Dendritic cell treated with granulocyte-macrophage colony-stimulating factor and Interleukin-4, amounts not matched to agents 40 ng/mL and 50 ng/mL, for 4 days (primary cell): ENCODE measurements at regions of chr17 and their contacts with region 1.

Region 1: GRCh38 chr17:81142301-81143199 is 22.8 kb upstream of the PVALEF start:
- H3K4me3 Mint-ChIP-seq: no peak overlapping the region
- H3K27ac Mint-ChIP-seq: peak overlapping the region; percentile 74
- H3K4me1 Mint-ChIP-seq: peaks cover 36% of the 10 kb centered on the region
- H3K27me3 Mint-ChIP-seq: no peaks in the 10 kb centered on the region

Region 2: GRCh38 chr17:81083125-81083765 is 59.3 kb before region 1 on chr17:
- intact Hi-C with region 1: no loop called
- H3K4me3 Mint-ChIP-seq: no peak overlapping the region
- H3K27ac Mint-ChIP-seq: no peak overlapping the region
- H3K4me1 Mint-ChIP-seq: no peaks in the 10 kb centered on the region
- H3K27me3 Mint-ChIP-seq: no peaks in the 10 kb centered on the region

Region 3: GRCh38 chr17:81094509-81095382 is 47.8 kb before region 1 on chr17:
- intact Hi-C with region 1: no loop called
- H3K4me3 Mint-ChIP-seq: no peak overlapping the region
- H3K27ac Mint-ChIP-seq: peak overlapping the region; percentile 35
- H3K4me1 Mint-ChIP-seq: peaks cover 81% of the 10 kb centered on the region
- H3K27me3 Mint-ChIP-seq: peaks cover 14% of the 10 kb centered on the region

Region 4: DNA sequence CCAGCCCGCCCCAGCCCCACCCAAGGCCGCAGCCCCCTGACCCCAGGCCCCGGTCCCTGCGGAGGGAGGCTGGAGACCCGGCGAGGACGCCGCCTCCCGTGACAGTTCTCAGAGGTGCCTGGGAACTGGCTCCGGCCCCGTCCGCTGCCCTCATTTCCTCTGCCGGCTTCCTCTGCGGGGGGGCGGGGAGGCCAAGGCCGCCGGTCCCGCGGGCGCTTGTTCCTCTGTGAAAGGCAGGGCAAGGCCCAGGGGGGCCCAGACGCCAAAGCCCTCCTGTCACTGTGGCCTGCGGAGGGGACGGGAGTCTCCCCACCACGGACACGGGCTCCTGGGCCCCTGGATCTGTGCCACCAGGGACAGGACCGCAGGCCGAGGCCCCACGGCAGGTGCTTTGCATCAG is 17.8 kb after region 1 on chr17:
- intact Hi-C with region 1: loop called (anchors 2 kb)
- H3K4me3 Mint-ChIP-seq: peak overlapping the region; percentile 69
- H3K27ac Mint-ChIP-seq: peak overlapping the region; percentile 75
- H3K4me1 Mint-ChIP-seq: peaks cover 45% of the 10 kb centered on the region
- H3K27me3 Mint-ChIP-seq: peaks cover 34% of the 10 kb centered on the region

Region 5: DNA sequence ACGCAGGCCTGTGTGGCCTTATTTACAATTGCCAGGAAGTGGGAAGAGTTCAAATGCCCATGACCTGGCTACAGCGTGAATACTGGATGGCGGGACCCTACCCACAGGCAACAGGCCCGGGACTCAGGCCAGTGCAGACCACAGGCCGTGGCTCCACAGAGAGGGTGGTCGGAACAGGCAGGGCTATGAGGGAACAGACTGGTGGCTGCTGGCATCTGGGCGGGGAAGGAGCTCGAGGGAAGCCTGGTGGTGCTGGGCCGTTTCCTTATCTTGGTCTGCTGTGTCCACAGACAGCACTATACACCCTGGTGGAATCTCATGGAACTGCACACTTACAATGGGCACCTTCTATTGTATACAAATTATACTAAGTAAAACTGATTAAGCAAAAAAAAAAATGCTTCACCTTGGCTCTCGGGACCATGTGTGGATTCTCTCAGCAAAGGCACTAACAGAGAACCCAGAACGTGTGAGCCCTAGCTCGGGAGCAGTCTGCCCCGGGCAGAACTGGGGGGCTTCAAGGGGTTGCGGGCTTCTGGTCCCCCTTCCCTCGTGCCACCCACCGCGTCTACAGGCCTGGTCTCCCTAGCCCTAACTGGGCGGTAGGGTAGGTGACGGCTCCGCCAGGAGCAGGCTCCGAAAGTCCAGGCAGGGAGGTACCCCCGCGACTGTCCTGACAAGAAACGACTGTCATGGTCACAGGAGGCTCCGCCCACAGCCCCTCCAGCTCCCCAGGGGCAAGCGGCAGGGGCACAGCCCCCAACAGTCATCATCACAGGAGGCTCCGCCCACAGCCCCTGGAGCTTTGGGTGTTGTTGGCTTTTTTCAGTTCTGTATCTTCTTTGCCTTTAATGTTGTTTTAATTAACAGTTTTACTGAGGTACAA is 58.4 kb after region 1 on chr17:
- intact Hi-C with region 1: loop called (anchors 1 kb)
- H3K4me3 Mint-ChIP-seq: no peak overlapping the region
- H3K27ac Mint-ChIP-seq: no peak overlapping the region
- H3K4me1 Mint-ChIP-seq: peaks cover 5% of the 10 kb centered on the region
- H3K27me3 Mint-ChIP-seq: no peaks in the 10 kb centered on the region

Region 6: GRCh38 chr17:81238817-81239600 is 96.5 kb after region 1 on chr17 and contains the starts of genes NDUFAF8 and TEPSIN:
- intact Hi-C with region 1: loop called (anchors 1 kb)
- H3K4me3 Mint-ChIP-seq: peak within 1 kb of the TSS; percentile 90
- H3K27ac Mint-ChIP-seq: peak within 1 kb of the TSS; percentile 81
- H3K4me1 Mint-ChIP-seq: peaks cover 62% of the 10 kb centered on the region
- H3K27me3 Mint-ChIP-seq: no peaks in the 10 kb centered on the region